ENCODE measurements at regions of chr16 and their contacts with region 1.

Region 1: GRCh38 chr16:50989047-50989446 is 162.0 kb downstream of the SALL1 start:
- DNase-seq: no peak
- H3K4me3 ChIP-seq: no peak overlapping the region
- H3K27ac ChIP-seq: no peak overlapping the region
- H3K4me1 ChIP-seq: peaks cover 6 to 20% of the 10 kb centered on the region in 2 donors
- H3K27me3 ChIP-seq: no peaks in the 10 kb centered on the region
- CTCF ChIP-seq: no peak
- POLR2A ChIP-seq: no peak

Region 2: DNA sequence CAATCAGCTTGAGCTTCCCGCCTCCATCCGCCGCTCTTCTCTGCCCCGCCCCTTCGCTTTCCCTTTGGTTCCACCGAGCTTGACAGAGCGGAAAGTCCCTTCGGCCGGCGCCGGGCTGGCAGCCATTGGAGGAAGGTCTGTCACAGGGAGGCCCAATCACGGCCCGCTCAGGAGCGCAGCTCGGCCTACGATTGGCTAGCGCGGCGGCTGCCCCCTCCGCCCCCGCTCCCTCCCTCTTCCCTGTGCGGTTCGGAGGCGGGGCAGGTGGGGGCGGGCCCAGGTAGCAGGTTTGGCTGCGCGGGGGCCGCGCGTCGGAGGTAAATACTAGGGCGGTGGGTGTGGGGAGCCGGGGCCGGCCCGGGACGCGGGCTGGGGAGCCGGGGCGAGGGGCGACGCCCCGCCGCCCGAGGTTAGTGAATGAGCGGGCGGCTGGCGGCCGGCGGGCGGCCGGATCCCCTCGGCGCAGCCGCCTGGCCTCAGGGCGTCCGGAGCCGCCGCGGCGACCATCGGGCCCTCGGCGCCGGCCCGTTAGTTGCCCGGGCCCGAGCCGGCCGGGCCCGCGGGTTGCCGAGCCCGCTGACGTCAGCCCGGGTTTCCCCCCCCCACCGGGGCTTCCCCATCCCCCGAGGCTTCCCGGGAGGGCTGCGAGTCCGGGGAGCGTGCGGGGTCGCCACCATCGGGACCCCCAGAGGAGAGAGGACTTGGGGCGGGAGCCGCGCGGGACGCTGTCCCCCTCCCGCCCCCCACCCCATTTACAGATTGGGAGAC is 247.1 kb before region 1 on chr16 and contains the start of gene CYLD:
- intact Hi-C with region 1: no loop called
- DNase-seq: peak; percentile 100
- H3K4me3 ChIP-seq: peak within 1 kb of the TSS; percentile 72 to 91 (median 86)
- H3K27ac ChIP-seq: peak within 1 kb of the TSS; percentile 74 to 88 (median 88)
- H3K4me1 ChIP-seq: peaks cover 29 to 41% of the 10 kb centered on the region in 2 donors
- H3K27me3 ChIP-seq: no peaks in the 10 kb centered on the region
- CTCF ChIP-seq: no peak
- POLR2A ChIP-seq: peak; percentile 65 to 83
- total RNA-seq, gene CYLD: 79.2 to 180 (median 92.4) TPM

Region 3: DNA sequence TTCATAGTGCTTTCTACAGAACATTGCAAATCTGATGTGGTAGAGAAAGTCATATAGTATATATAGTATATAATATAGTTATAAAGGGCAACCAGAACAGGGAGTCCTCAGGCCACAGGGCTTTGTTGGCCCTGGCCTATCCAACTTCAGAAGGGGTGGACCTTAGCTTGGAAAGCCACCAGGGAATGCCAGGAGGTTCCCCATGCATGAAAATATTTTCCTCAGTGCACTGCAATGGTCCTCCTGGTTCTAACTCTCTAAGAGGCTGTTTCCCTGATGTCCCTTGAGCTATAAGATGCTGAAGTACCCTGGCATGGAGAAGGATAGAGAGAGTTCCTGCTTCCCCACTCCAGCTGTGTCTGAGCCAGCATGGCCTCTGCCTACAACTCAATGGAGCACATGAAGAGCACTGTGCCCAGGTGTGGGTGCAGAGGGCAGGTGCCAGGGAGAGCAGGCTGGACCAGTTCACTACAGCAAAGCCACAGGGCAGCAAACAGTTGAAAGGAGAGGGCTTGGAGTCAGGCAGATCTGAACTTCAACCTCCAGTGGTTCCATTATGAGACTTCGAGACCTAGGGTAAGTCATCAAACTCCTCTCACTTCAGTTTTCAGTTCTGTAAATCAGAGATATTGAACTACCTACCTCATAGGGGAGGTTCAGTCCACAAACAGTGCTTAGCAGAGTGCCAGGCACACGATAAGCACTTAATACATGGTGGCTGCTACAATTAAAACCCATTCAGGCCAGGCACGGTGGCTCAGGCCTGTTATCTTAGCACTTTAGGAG is 21.0 kb before region 1 on chr16:
- intact Hi-C with region 1: no loop called
- DNase-seq: peak; percentile 72 to 77
- H3K4me3 ChIP-seq: no peak overlapping the region
- H3K27ac ChIP-seq: peak overlapping the region; percentile 44 to 75 (median 53)
- H3K4me1 ChIP-seq: peaks cover 18 to 20% of the 10 kb centered on the region in 2 donors
- H3K27me3 ChIP-seq: no peaks in the 10 kb centered on the region
- CTCF ChIP-seq: no peak
- POLR2A ChIP-seq: peak in 1 of 2 donors; percentile 9

Region 4: DNA sequence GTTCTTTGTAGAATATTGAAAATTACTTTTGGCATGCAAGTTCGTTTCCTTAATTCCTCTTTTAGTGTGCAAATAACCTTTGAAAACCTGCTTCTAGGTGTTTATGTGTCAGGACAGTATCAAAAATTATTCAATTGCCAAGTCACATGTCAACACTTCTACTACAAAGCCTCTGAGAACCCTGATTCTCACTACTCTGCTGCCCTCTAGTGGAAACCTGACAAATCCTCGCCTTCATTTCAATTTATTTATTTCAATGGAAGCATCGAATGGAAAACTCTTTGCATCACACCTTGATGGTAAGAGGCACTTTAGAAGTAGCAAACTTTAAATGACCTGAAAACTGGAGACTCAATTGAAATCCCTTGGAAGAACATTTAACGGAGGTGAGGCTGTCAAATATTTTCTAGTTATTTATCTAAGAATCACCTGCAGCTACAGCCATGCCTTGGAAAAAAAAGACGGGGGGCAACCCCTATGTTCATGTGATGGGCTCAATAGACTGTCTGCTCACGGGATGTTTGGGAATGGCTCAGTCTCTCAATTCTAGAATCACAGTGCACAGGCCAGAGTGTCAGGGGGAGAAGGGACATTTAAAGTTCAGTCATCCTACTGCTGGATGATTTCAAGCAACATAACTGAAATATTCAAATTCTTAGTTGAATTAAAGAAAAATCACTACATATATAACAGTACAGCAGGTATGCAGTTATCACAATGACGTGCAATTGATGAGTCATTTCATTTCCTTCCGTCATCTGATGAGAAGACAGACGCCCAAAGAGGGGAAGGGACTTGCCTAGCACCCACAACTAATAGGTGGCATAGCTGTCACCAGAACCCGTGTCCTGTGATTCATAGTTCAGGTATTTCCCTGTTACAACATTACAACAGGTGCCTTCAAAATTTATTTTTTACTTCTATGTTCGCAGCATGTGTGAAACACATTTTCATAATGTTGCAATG is 994.0 kb after region 1 on chr16:
- intact Hi-C with region 1: loop called (anchors 10 kb)
- DNase-seq: peak; percentile 46 to 47
- H3K4me3 ChIP-seq: no peak overlapping the region
- H3K27ac ChIP-seq: peak overlapping the region; percentile 34 to 64 (median 45)
- H3K4me1 ChIP-seq: peaks cover 19 to 28% of the 10 kb centered on the region in 2 donors
- H3K27me3 ChIP-seq: no peaks in the 10 kb centered on the region
- CTCF ChIP-seq: peak; percentile 37 to 96 (median 83)
- POLR2A ChIP-seq: no peak

Measured in thyroid gland (tissue), 4 donors.